ENCODE measurements at regions of chr11 and their contacts with region 1.

Region 1: GRCh38 chr11:535519-536454 is at the start of gene HRAS:
- DNase-seq: peak; percentile 99
- ATAC-seq: peak; percentile 87
- H3K4me3 Mint-ChIP-seq: peak within 1 kb of the TSS; percentile 89
- H3K27ac Mint-ChIP-seq: peak within 1 kb of the TSS; percentile 92
- H3K4me1 Mint-ChIP-seq: peaks cover 7% of the 10 kb centered on the region
- H3K27me3 Mint-ChIP-seq: no peaks in the 10 kb centered on the region
- total RNA-seq, gene HRAS: 47.6 to 49.9 TPM

Region 2: DNA sequence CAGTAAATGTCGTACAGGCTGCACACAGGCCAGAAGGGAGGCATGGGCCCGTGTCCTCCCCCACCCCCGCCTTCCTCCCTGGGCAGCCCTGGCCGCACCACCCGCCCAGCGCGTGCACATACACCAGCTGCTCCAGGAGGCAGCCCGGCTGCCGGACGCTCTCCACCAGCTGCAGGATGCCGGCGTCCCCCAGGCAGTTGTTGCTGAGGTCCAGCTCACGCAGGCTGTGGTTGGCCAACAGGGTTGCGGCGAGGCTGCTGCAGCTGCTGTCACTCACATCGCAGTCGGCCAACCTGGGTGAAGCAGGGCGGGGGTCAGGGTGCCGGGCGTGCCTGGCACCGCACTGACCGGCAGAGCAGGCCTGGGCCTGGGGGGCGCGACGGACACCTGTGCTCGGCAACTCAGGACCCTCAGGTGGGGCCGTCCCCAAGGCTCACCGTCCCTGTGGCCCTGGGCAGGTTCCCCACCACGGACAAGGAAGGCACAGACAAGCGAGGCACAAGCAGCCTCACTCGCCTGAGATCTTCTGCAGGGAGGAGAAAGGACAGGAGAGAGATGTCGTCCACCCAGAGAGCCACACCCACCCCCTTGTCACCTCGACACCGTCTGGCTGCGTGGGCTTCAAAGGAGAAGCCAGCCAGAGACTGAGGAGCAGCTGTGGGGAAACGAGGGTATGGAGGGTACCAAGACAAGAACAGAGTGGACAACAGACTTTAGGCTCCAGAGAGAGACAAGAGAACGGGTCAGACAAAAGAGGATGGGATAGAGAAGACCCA is 40.8 kb before region 1 on chr11:
- POLR2A ChIA-PET with region 1: no interaction called
- DNase-seq: no peak
- ATAC-seq: no peak
- H3K4me3 Mint-ChIP-seq: no peak overlapping the region
- H3K27ac Mint-ChIP-seq: no peak overlapping the region
- H3K4me1 Mint-ChIP-seq: peaks cover 9% of the 10 kb centered on the region
- H3K27me3 Mint-ChIP-seq: no peaks in the 10 kb centered on the region

Region 3: GRCh38 chr11:554824-555472 is 19.2 kb after region 1 on chr11:
- POLR2A ChIA-PET with region 1: interaction called, 11 read pairs
- DNase-seq: peak; percentile 84
- ATAC-seq: peak; percentile 71
- H3K4me3 Mint-ChIP-seq: peak overlapping the region; percentile 61
- H3K27ac Mint-ChIP-seq: no peak overlapping the region
- H3K4me1 Mint-ChIP-seq: peaks cover 4% of the 10 kb centered on the region
- H3K27me3 Mint-ChIP-seq: peaks cover 18% of the 10 kb centered on the region

Measured in activated naive CD8-positive, alpha-beta T cell treated with anti-CD3 and anti-CD28 coated beads, Interleukin-2, amount 10 ng/mL, durations not matched to agents 7 days and 5 days (primary cell).